GM10248 (cell line): ENCODE measurements at regions of chr15 and their contacts with region 1.

Region 1: GRCh38 chr15:80567721-80568157 is 127.4 kb upstream of the ABHD17C start:
- DNase-seq: peak; percentile 49
- CTCF ChIP-seq: peak; percentile 40

Region 2: DNA sequence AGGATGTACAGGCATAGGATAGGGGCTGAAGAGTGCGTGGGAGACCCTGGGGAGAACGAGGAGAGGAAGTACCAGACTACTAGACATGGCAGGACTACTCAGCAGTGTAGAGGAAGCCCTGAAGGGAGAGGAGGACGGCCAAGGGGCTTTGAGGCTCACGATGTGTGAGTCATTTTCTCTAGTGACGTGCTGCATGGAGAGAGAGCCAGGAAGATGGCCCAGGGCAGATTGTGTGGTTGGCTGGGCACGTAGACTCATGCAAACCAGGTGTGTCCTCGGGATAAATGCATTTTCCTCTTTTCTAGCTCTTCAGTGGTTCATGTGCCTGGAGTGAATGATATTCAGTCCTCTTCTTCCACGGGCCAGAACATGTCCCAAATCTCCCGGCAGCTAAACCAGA is 12.4 kb after region 1 on chr15:
- CTCF ChIA-PET with region 1: interaction called, 12 read pairs
- POLR2A ChIA-PET with region 1: no interaction called
- DNase-seq: no peak
- CTCF ChIP-seq: no peak